ENCODE measurements at regions of chr9 and their contacts with region 1.

Region 1: DNA sequence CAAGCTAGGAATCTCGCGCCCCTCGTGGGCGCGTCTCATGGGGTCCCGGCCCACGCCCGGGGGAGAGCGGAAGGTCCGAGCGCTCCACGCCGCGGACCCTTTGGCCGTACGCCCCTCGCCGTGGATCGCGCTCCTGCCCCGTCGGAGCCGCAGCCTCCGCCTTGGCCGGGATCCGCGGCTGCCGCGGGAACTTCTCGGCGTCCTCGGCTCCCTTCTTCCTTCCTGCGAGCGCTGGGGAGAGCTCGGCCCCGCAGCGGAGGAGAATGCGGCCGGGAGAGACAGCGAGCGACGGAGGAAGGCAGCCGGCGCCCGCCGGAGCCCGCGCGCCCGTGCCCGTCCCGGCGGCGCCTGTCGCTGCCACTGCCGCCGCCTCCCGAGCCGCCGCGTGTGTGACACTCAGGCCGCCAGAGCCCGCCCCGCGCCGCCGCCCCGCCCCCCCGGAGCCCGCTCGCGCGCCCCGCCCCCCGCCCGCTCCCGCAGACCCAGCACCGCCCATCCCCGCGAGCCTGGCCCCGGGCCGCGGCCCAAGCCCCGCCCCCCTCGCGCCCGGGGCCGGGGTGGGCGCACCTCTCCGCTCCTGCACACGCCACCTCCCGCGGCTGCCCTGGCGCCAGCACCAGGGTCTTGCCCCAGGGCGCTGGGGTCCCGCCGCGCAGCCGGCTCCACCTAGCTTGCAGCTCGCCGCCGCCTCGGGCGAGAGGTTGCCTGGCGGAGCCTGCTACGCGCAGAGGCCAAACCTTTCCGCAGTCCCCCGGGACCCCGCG is at the start of gene SHB:
- DNase-seq: peak; percentile 86
- ATAC-seq: peak; percentile 80
- H3K4me3 Mint-ChIP-seq: peak within 1 kb of the TSS; percentile 56
- H3K27ac Mint-ChIP-seq: no peak within 1 kb of the TSS
- H3K4me1 Mint-ChIP-seq: peaks cover 15% of the 10 kb centered on the region
- H3K27me3 Mint-ChIP-seq: peaks cover 7% of the 10 kb centered on the region
- total RNA-seq, gene SHB: 1.2 to 1.3 TPM

Region 2: GRCh38 chr9:37036776-37037502 is 1032.1 kb before region 1 on chr9:
- CTCF ChIA-PET with region 1: no interaction called
- POLR2A ChIA-PET with region 1: no interaction called
- intact Hi-C with region 1: loop called in 1 of 2 experiments (anchors 5 kb)
- DNase-seq: peak; percentile 67
- ATAC-seq: peak; percentile 62
- H3K4me3 Mint-ChIP-seq: peak overlapping the region; percentile 74
- H3K27ac Mint-ChIP-seq: peak overlapping the region; percentile 14
- H3K4me1 Mint-ChIP-seq: peaks cover 35% of the 10 kb centered on the region
- H3K27me3 Mint-ChIP-seq: peaks cover 66% of the 10 kb centered on the region

Region 3: DNA sequence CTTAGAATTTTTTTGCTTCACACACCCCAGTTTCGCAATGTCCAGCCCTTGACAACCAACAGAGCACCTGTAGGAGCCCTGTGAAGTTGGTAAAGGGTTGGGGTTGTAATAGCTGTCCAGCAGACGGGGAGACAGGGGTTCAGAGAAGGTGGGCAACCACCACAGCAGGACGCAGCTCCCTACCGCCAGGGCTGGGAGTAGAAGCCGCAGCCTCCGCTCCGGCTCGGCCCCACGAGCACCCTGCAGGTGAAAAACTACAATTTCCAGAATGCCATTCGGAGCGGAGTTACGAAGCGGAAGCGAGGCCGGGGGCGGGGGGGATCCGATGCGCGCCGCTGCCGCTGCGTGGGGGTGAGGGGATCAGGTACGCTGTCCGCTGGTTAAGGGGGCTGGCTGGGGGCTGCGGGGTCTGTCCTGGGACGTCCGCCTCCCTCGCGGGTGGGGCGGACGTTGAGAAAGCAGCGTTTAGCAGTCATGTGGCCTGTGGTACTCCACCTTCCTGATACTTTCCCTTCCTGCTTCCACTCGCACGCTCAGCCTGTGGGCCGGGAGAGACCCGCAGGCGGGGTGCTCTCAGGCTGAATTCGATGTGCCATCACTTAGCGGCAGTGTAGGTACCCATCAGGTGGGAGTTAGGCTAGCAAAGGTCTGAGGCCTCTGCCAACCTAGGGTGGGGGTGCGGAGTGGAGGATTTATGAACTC is 315.4 kb before region 1 on chr9 and contains the start of gene TRMT10B:
- CTCF ChIA-PET with region 1: interaction called, 3 read pairs
- POLR2A ChIA-PET with region 1: no interaction called
- intact Hi-C with region 1: loop called in 1 of 2 experiments (anchors 2 kb)
- DNase-seq: peak; percentile 88
- ATAC-seq: peak; percentile 94
- H3K4me3 Mint-ChIP-seq: peak within 1 kb of the TSS; percentile 91
- H3K27ac Mint-ChIP-seq: peak within 1 kb of the TSS; percentile 92
- H3K4me1 Mint-ChIP-seq: peaks cover 32% of the 10 kb centered on the region
- H3K27me3 Mint-ChIP-seq: no peaks in the 10 kb centered on the region
- total RNA-seq, gene TRMT10B: 12.3 to 15.6 TPM

Region 4: GRCh38 chr9:37903647-37904444 is 165.2 kb before region 1 on chr9 and contains the start of gene SLC25A51:
- CTCF ChIA-PET with region 1: interaction called, 3 read pairs
- POLR2A ChIA-PET with region 1: interaction called, 4 read pairs
- intact Hi-C with region 1: loop called (anchors 1 to 2 kb)
- DNase-seq: peak; percentile 96
- ATAC-seq: peak; percentile 86
- H3K4me3 Mint-ChIP-seq: peak within 1 kb of the TSS; percentile 85
- H3K27ac Mint-ChIP-seq: peak within 1 kb of the TSS; percentile 89
- H3K4me1 Mint-ChIP-seq: peaks cover 11% of the 10 kb centered on the region
- H3K27me3 Mint-ChIP-seq: no peaks in the 10 kb centered on the region
- total RNA-seq, gene SLC25A51: 25.5 to 29.4 TPM

Region 5: DNA sequence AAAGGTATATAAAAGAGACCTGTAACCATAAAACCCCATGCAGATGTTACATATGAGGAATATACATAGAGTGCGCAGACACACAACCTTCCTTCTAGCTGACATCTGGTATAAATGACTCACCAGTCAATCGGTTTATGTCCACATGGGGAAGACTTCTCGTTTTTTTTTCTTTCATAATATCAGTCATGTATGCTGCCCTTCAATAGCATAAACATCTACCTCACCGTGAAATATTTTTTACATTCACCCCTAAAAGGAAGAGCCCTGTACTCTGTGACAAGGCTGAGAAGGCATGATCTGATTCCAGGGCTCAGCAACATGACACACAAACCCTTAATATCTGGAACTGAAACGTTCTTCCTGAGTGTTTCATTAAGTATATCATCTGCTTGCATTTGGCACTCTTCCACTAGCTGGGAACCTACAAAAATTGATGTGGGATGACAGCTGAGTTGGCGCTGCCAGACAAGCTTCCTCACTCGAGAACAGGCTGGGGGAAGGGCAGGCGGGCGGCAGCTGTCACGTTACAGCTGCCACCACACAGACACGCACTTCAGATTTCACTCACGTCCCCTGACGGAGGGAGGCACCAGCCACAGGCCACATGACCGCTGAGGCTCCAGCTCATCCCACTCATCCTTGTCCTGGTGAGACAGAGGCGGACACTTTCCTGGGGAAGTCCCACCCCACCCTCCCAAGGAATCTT is 74.3 kb before region 1 on chr9:
- CTCF ChIA-PET with region 1: no interaction called
- POLR2A ChIA-PET with region 1: no interaction called
- intact Hi-C with region 1: no loop called
- DNase-seq: peak; percentile 81
- ATAC-seq: peak; percentile 90
- H3K4me3 Mint-ChIP-seq: peak overlapping the region; percentile 16
- H3K27ac Mint-ChIP-seq: peak overlapping the region; percentile 74
- H3K4me1 Mint-ChIP-seq: peaks cover 18% of the 10 kb centered on the region
- H3K27me3 Mint-ChIP-seq: peaks cover 7% of the 10 kb centered on the region

Region 6: DNA sequence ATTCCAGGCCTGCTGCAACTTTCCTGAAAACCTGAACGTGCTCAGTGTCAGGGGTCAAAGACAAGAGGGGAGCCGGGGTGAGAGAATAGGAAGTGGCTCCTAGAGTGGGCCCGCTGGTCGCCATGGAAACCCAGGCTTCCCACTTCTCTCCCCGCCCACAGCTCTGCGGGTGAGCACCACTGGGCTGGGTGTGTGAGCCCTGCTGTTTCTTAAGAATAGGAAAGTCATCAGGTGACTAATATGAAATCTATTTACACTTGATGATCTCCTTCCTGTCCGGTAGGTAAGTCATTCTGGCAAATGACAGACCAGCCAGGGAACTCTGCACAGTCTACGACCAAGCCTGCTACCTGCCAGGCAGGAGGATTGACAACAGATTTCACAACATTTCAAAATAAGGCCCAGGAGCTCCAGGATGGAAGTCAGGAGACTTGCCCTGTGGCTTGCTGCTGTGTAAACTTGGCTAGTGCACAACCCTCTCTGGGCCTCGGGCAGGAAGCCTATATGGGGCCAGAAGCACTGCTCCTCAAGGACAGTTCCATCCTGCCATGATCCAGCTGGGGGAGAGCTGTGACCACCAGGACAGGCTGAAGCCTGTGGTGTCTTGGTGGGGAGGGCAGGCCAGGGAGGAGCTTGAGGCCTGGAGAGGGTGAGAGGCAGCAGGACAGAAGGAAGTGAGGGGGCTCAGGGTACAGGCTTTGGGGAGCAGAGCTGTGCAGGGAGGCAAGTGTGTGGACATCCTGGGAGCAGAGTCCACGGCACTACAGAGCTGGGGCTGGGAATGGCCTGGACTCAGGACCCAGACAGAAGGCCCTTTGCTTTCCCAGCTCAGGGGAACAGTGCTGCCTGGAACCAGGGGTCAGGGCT is 60.6 kb before region 1 on chr9:
- CTCF ChIA-PET with region 1: no interaction called
- POLR2A ChIA-PET with region 1: no interaction called
- intact Hi-C with region 1: loop called (anchors 2 to 5 kb)
- DNase-seq: peak; percentile 82
- ATAC-seq: peak; percentile 91
- H3K4me3 Mint-ChIP-seq: no peak overlapping the region
- H3K27ac Mint-ChIP-seq: peak overlapping the region; percentile 88
- H3K4me1 Mint-ChIP-seq: peaks cover 17% of the 10 kb centered on the region
- H3K27me3 Mint-ChIP-seq: no peaks in the 10 kb centered on the region

Region 7: GRCh38 chr9:38243993-38244392 is 174.9 kb after region 1 on chr9:
- CTCF ChIA-PET with region 1: no interaction called
- POLR2A ChIA-PET with region 1: no interaction called
- intact Hi-C with region 1: no loop called
- DNase-seq: no peak
- ATAC-seq: no peak
- H3K4me3 Mint-ChIP-seq: no peak overlapping the region
- H3K27ac Mint-ChIP-seq: no peak overlapping the region
- H3K4me1 Mint-ChIP-seq: no peaks in the 10 kb centered on the region
- H3K27me3 Mint-ChIP-seq: peaks cover 2% of the 10 kb centered on the region

Region 8: DNA sequence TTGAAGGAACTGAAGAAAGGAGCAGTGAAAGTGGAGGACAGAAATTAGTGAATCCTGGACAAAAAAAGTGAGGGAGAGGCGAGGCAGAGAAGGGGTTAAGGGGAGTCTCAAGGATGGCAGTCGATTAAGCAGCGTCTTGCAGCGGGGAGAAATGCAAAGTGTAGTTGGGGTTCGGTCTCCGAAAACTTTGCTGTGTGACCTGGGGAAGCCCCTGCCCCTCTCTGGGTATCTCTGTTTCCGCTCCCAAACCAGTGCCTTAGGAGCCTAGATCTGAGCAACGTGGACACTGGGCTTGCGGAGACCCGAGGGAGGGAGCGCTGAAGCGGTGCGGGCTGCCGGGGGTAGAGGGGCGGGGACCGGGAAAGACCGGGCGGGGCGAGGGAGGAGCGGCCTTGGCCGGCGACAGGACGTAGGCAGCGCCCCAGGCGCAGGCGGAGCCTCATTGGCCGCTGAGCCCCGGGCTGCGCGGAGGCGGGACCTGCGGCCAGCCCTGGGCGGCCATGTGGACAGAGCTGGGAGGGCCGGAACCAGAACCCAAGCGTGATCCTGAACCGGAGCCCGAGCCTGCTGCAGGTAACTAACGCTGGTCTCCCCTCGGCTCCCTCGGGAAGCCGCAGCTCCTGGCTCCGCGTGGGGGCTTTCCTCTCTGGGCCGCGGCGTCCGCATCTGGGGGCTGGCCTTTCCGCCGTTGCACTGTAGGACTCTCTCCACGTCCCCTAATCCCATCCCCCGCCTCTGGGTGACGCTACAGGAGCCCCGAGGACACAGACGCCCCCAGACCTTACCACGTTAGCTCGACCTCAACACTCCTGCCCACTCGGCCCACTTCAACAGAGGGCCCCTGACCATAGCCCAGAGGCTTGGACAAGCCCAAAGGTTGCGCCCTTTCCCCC is 323.4 kb after region 1 on chr9 and contains the start of gene ALDH1B1:
- CTCF ChIA-PET with region 1: no interaction called
- POLR2A ChIA-PET with region 1: no interaction called
- intact Hi-C with region 1: loop called in 1 of 2 experiments (anchors 1 kb)
- DNase-seq: peak; percentile 81
- ATAC-seq: peak; percentile 99
- H3K4me3 Mint-ChIP-seq: peak within 1 kb of the TSS; percentile 91
- H3K27ac Mint-ChIP-seq: peak within 1 kb of the TSS; percentile 83
- H3K4me1 Mint-ChIP-seq: peaks cover 13% of the 10 kb centered on the region
- H3K27me3 Mint-ChIP-seq: peaks cover 6% of the 10 kb centered on the region
- total RNA-seq, gene ALDH1B1: 20.3 to 21.8 TPM